Activated CD4-positive, alpha-beta T cell treated with anti-CD3 and anti-CD28 coated beads, Interleukin-2, amount 10 ng/mL, durations not matched to agents 24 days and 14 days (primary cell): ENCODE measurements at regions of chr10 and their contacts with region 1.

Region 1: GRCh38 chr10:68560186-68560942 is at the start of gene TET1:
- DNase-seq: peak; percentile 76
- H3K4me3 Mint-ChIP-seq: peak within 1 kb of the TSS; percentile 71
- H3K27ac Mint-ChIP-seq: no peak within 1 kb of the TSS
- H3K4me1 Mint-ChIP-seq: peaks cover 18% of the 10 kb centered on the region
- H3K27me3 Mint-ChIP-seq: peaks cover 68% of the 10 kb centered on the region
- total RNA-seq, gene TET1: 0.96 and 1.2 TPM in 2 replicates

Region 2: DNA sequence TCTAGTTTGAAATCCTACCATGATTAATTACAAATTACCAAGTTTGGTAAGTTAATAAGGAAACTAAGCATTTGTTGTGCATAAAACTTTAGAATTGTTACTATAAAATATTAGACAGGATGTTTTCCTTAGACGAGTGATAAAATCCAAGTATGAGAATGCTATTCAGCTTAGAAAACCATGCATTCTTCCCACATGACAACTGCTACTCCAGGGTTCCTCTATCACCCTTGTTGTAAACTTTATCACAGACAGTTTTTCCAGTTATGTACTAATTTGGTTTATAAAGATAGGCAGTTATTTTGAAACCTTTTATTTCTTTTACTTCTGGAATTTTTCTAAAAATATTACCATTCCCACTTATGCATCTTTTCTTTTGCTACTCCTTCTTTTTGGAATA is 623.9 kb before region 1 on chr10:
- intact Hi-C with region 1: no loop called
- DNase-seq: no peak
- H3K4me3 Mint-ChIP-seq: no peak overlapping the region
- H3K27ac Mint-ChIP-seq: no peak overlapping the region
- H3K4me1 Mint-ChIP-seq: no peaks in the 10 kb centered on the region
- H3K27me3 Mint-ChIP-seq: no peaks in the 10 kb centered on the region

Region 3: DNA sequence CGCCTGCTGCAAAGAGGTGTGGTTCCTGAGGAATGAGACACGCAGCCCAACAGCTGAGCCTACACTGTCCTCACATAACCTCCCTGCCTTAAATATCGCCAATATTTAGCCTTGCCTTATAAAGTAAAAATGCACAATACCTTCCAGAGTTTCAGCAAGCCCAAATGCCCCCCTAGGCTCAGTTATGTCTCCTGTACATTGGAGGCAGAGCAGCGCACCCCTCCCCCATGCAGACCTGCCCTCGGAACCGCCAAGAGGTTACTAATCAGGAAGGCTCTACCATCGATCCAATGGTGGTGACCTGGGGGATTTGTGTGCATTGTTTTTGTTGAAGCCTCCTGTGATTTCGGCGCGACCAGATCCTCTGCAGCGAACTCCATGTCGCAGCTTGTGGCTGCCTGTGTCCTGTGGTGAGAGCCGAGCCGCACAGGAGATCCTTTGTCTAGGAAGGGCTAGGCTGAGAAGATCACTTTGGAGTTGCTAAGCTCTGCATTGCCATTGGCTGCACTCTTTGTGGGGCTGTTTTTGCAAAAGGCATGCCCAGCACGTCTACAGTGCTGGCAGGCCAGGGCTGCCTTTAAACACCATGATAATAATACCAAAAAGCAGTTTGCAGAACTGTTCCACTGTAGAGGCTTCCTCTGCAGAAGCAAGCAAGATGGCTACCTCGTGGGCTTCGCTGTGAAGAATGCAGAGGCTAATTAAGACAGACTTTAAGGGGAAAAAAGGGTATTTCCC is 39.8 kb after region 1 on chr10:
- intact Hi-C with region 1: loop called (anchors 1 kb)
- DNase-seq: peak; percentile 88
- H3K4me3 Mint-ChIP-seq: peak overlapping the region; percentile 90
- H3K27ac Mint-ChIP-seq: peak overlapping the region; percentile 88
- H3K4me1 Mint-ChIP-seq: peaks cover 28% of the 10 kb centered on the region
- H3K27me3 Mint-ChIP-seq: no peaks in the 10 kb centered on the region